Left lung (tissue), 14 donors: ENCODE measurements at regions of chr7 and their contacts with region 1.

Region 1: DNA sequence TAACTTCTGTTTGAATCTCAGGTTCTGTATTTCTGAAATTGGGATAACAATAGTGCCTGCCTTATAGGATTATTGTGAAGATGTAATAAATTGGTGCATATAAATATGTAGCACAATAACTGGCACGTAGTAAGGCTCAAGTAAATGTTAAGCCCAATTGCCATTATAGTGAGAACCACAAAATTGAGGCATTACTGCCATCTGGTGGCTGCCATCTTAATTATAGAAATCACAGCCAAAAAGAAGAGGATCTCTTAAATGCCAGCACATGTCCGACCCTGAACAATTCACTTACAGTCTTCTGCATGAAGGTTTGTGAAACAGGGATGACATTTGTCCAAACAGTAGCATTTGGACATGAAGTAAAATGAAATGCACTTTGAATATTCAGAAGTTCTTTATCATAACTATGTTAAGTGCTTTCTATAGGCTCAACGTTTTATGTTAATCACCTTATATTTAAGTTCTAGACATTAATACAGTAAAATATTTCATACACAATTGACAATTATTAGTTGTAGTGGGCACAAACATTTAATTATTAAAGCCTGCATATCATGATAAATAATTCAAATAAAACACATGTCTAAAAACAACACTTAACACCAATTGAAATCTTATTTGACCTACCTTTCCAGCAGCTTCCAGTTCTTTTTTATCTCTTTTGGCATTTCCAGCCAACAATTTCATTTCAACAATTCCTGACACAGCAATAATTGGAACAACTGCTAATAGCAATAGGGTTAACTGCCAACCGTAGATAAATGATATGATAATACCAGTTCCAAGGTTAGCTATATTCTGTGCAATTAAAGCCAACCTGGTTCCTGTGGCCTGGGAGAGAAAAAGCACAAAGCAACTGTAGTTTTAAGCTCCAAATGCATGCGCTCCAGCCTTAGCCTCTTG is 58.5 kb downstream of the ABCB4 start:
- DNase-seq: peak in 2 of 4 donors; percentile 62 to 73
- ATAC-seq: peak; percentile 83
- H3K4me3 ChIP-seq: no peak overlapping the region
- H3K27ac ChIP-seq: no peak overlapping the region
- H3K4me1 ChIP-seq: no peaks in the 10 kb centered on the region
- H3K27me3 ChIP-seq: no peaks in the 10 kb centered on the region
- CTCF ChIP-seq: peak; percentile 35 to 56

Region 2: GRCh38 chr7:86013662-86014061 is 1403.3 kb before region 1 on chr7:
- intact Hi-C with region 1: no loop called
- DNase-seq: no peak
- ATAC-seq: peak; percentile 76
- H3K4me3 ChIP-seq: no peak overlapping the region
- H3K27ac ChIP-seq: no peak overlapping the region
- H3K4me1 ChIP-seq: no peaks in the 10 kb centered on the region
- H3K27me3 ChIP-seq: no peaks in the 10 kb centered on the region
- CTCF ChIP-seq: no peak

Region 3: GRCh38 chr7:87312215-87312865 is 104.6 kb before region 1 on chr7:
- intact Hi-C with region 1: loop called (anchors 2 to 10 kb)
- DNase-seq: peak in 3 of 4 donors; percentile 47 to 75 (median 49)
- ATAC-seq: peak; percentile 99
- H3K4me3 ChIP-seq: no peak overlapping the region
- H3K27ac ChIP-seq: no peak overlapping the region
- H3K4me1 ChIP-seq: no peaks in the 10 kb centered on the region
- H3K27me3 ChIP-seq: no peaks in the 10 kb centered on the region
- CTCF ChIP-seq: peak; percentile 97 to 99

Region 4: DNA sequence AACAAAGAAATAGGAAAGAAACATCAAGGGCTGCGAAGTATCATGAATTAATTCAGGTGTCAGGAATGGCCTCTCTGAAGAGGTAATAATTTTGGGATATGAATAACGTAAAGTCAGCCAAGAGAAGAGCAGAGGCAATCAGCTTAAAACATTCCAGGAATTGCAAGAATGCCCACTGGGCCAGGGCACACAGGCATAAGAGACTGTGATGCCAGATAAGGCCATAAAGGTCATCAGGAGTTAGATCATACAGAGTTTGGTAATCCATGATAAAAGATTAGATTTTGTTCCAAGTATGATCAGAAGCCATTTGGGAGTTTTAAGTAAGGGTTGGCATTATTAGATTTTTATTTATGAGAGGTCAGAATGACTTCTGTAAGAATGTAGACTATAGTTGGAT is 111.8 kb after region 1 on chr7:
- intact Hi-C with region 1: no loop called
- DNase-seq: no peak
- ATAC-seq: no peak
- H3K4me3 ChIP-seq: no peak overlapping the region
- H3K27ac ChIP-seq: no peak overlapping the region
- H3K4me1 ChIP-seq: no peaks in the 10 kb centered on the region
- H3K27me3 ChIP-seq: no peaks in the 10 kb centered on the region
- CTCF ChIP-seq: no peak

Region 5: GRCh38 chr7:87853237-87853864 is 436.4 kb after region 1 on chr7:
- intact Hi-C with region 1: no loop called
- DNase-seq: no peak
- ATAC-seq: no peak
- H3K4me3 ChIP-seq: no peak overlapping the region
- H3K27ac ChIP-seq: peak overlapping the region in 1 of 2 donors; percentile 38
- H3K4me1 ChIP-seq: peaks cover 0 to 17% of the 10 kb centered on the region in 2 donors
- H3K27me3 ChIP-seq: no peaks in the 10 kb centered on the region
- CTCF ChIP-seq: no peak